ENCODE measurements at regions of chr10 and their contacts with region 1.

Region 1: DNA sequence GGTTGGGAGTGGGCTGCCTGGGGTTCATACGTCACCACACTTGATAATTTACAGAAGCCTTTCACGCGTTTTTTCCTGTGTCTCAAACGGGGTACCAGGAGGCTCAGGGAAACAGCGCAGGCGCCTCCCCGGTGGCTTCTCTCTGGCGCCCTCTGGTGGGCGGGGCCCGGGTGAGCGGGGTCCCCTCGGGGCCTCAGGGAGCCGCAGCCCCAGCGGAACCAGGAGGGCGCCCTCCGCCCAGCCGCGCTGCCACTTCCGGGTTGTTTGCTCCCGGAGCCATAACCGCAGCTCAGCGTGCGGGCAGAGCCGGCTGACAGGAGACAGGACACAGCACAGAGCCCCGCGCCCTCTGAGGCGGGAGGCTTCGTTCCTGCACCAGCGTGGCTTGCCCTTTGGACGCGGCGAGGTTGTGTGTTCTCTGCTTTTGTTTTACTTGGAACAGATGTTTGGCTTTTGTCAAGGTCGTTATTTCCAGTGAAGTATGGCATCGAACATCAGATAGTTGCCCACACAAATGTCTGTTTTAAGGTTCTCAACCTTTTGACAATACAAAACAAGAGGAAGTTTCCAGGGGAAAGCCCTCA is 6.9 kb upstream of the CYP2E1 start:
- DNase-seq: peak; percentile 89 to 90
- ATAC-seq: peak; percentile 96 to 99 (median 98)
- H3K4me3 ChIP-seq: peak overlapping the region; percentile 31
- H3K4me3 Mint-ChIP-seq: peak overlapping the region; percentile 58
- H3K27ac ChIP-seq: peak overlapping the region; percentile 25
- H3K27ac Mint-ChIP-seq: peak overlapping the region; percentile 29 to 36
- H3K4me1 ChIP-seq: peaks cover 12% of the 10 kb centered on the region
- H3K4me1 Mint-ChIP-seq: peaks cover 11 to 14% of the 10 kb centered on the region in 2 donors
- H3K27me3 ChIP-seq: no peaks in the 10 kb centered on the region
- H3K27me3 Mint-ChIP-seq: peaks cover 12 to 27% of the 10 kb centered on the region in 2 donors
- CTCF ChIP-seq: peak; percentile 98

Region 2: GRCh38 chr10:133329491-133330202 is 190.6 kb before region 1 on chr10:
- intact Hi-C with region 1: loop called (anchors 1 kb)
- DNase-seq: peak; percentile 82 to 94
- ATAC-seq: peak; percentile 88 to 92 (median 90)
- H3K4me3 ChIP-seq: no peak overlapping the region
- H3K4me3 Mint-ChIP-seq: peak overlapping the region; percentile 65
- H3K27ac ChIP-seq: no peak overlapping the region
- H3K27ac Mint-ChIP-seq: peak overlapping the region in 1 of 2 donors; percentile 80
- H3K4me1 ChIP-seq: peaks cover 19% of the 10 kb centered on the region
- H3K4me1 Mint-ChIP-seq: peaks cover 9 to 22% of the 10 kb centered on the region in 2 donors
- H3K27me3 ChIP-seq: peaks cover 41% of the 10 kb centered on the region
- H3K27me3 Mint-ChIP-seq: peaks cover 41 to 57% of the 10 kb centered on the region in 2 donors
- CTCF ChIP-seq: peak; percentile 96

Measured in natural killer cell (primary cell).